ENCODE measurements at regions of chr16 and their contacts with region 1.

Region 1: GRCh38 chr16:11255737-11256660 is at the start of gene SOCS1:
- DNase-seq: peak; percentile 76 to 97 (median 87)
- ATAC-seq: peak; percentile 82
- H3K4me3 ChIP-seq: peak within 1 kb of the TSS; percentile 85
- H3K4me3 Mint-ChIP-seq: peak within 1 kb of the TSS; percentile 91 to 98 (median 94)
- H3K27ac ChIP-seq: peak within 1 kb of the TSS; percentile 97
- H3K27ac Mint-ChIP-seq: peak within 1 kb of the TSS; percentile 88 to 97 (median 96)
- H3K4me1 ChIP-seq: peaks cover 48 to 52% of the 10 kb centered on the region in 2 donors
- H3K4me1 Mint-ChIP-seq: peaks cover 19 to 64% (median 59%) of the 10 kb centered on the region in 7 donors
- H3K27me3 ChIP-seq: no peaks in the 10 kb centered on the region
- H3K27me3 Mint-ChIP-seq: peaks cover 0 to 4% (median 0%) of the 10 kb centered on the region in 5 donors
- total RNA-seq, gene SOCS1: 12.8 to 191 (median 46.8) TPM

Region 2: GRCh38 chr16:9665851-9666271 is 1590.1 kb before region 1 on chr16:
- CTCF ChIA-PET with region 1: no interaction called
- POLR2A ChIA-PET with region 1: no interaction called
- intact Hi-C with region 1: no loop called
- DNase-seq: no peak
- ATAC-seq: no peak
- H3K4me3 ChIP-seq: no peak overlapping the region
- H3K4me3 Mint-ChIP-seq: no peak overlapping the region
- H3K27ac ChIP-seq: no peak overlapping the region
- H3K27ac Mint-ChIP-seq: no peak overlapping the region
- H3K4me1 ChIP-seq: no peaks in the 10 kb centered on the region
- H3K4me1 Mint-ChIP-seq: no peaks in the 10 kb centered on the region
- H3K27me3 ChIP-seq: no peaks in the 10 kb centered on the region
- H3K27me3 Mint-ChIP-seq: peaks cover 0 to 12% (median 3%) of the 10 kb centered on the region in 5 donors

Region 3: GRCh38 chr16:10971560-10971961 is 284.4 kb before region 1 on chr16:
- CTCF ChIA-PET with region 1: interaction called, 29 read pairs
- POLR2A ChIA-PET with region 1: interaction called, 17 read pairs
- intact Hi-C with region 1: loop called (anchors 1 kb)
- DNase-seq: peak in 6 of 9 donors; percentile 15 to 56 (median 46)
- ATAC-seq: peak; percentile 62
- H3K4me3 ChIP-seq: no peak overlapping the region
- H3K4me3 Mint-ChIP-seq: peak overlapping the region in 1 of 10 donors; percentile 60
- H3K27ac ChIP-seq: no peak overlapping the region
- H3K27ac Mint-ChIP-seq: peak overlapping the region in 3 of 9 donors; percentile 18 to 49 (median 42)
- H3K4me1 ChIP-seq: no peaks in the 10 kb centered on the region
- H3K4me1 Mint-ChIP-seq: peaks cover 6 to 70% (median 15%) of the 10 kb centered on the region in 7 donors
- H3K27me3 ChIP-seq: no peaks in the 10 kb centered on the region
- H3K27me3 Mint-ChIP-seq: no peaks in the 10 kb centered on the region

Region 4: GRCh38 chr16:11177578-11178160 is 78.3 kb before region 1 on chr16:
- CTCF ChIA-PET with region 1: no interaction called
- POLR2A ChIA-PET with region 1: no interaction called
- intact Hi-C with region 1: no loop called
- DNase-seq: no peak
- ATAC-seq: no peak
- H3K4me3 ChIP-seq: no peak overlapping the region
- H3K4me3 Mint-ChIP-seq: no peak overlapping the region
- H3K27ac ChIP-seq: no peak overlapping the region
- H3K27ac Mint-ChIP-seq: peak overlapping the region in 1 of 9 donors; percentile 78
- H3K4me1 ChIP-seq: no peaks in the 10 kb centered on the region
- H3K4me1 Mint-ChIP-seq: peaks cover 4 to 52% (median 13%) of the 10 kb centered on the region in 7 donors
- H3K27me3 ChIP-seq: no peaks in the 10 kb centered on the region
- H3K27me3 Mint-ChIP-seq: no peaks in the 10 kb centered on the region

Region 5: GRCh38 chr16:11224096-11224893 is 31.7 kb before region 1 on chr16:
- CTCF ChIA-PET with region 1: interaction called, 26 read pairs
- POLR2A ChIA-PET with region 1: interaction called, 244 read pairs
- intact Hi-C with region 1: loop called (anchors 1 kb)
- DNase-seq: peak; percentile 36 to 67 (median 48)
- ATAC-seq: peak; percentile 68
- H3K4me3 ChIP-seq: peak overlapping the region; percentile 49
- H3K4me3 Mint-ChIP-seq: peak overlapping the region; percentile 78 to 87 (median 80)
- H3K27ac ChIP-seq: peak overlapping the region; percentile 91
- H3K27ac Mint-ChIP-seq: peak overlapping the region; percentile 97 to 99 (median 98)
- H3K4me1 ChIP-seq: peaks cover 30 to 36% of the 10 kb centered on the region in 2 donors
- H3K4me1 Mint-ChIP-seq: peaks cover 37 to 73% (median 52%) of the 10 kb centered on the region in 7 donors
- H3K27me3 ChIP-seq: no peaks in the 10 kb centered on the region
- H3K27me3 Mint-ChIP-seq: no peaks in the 10 kb centered on the region

Region 6: GRCh38 chr16:11328172-11329070 is 72.4 kb after region 1 on chr16:
- CTCF ChIA-PET with region 1: interaction called, 3 read pairs
- POLR2A ChIA-PET with region 1: interaction called, 16 read pairs
- intact Hi-C with region 1: no loop called
- DNase-seq: peak in 7 of 9 donors; percentile 24 to 52 (median 30)
- ATAC-seq: peak; percentile 83
- H3K4me3 ChIP-seq: peak overlapping the region; percentile 32
- H3K4me3 Mint-ChIP-seq: peak overlapping the region; percentile 46 to 85 (median 70)
- H3K27ac ChIP-seq: no peak overlapping the region
- H3K27ac Mint-ChIP-seq: peak overlapping the region; percentile 21 to 88 (median 73)
- H3K4me1 ChIP-seq: peaks cover 8 to 17% of the 10 kb centered on the region in 2 donors
- H3K4me1 Mint-ChIP-seq: peaks cover 11 to 68% (median 26%) of the 10 kb centered on the region in 7 donors
- H3K27me3 ChIP-seq: no peaks in the 10 kb centered on the region
- H3K27me3 Mint-ChIP-seq: peaks cover 0 to 4% (median 0%) of the 10 kb centered on the region in 5 donors

Region 7: DNA sequence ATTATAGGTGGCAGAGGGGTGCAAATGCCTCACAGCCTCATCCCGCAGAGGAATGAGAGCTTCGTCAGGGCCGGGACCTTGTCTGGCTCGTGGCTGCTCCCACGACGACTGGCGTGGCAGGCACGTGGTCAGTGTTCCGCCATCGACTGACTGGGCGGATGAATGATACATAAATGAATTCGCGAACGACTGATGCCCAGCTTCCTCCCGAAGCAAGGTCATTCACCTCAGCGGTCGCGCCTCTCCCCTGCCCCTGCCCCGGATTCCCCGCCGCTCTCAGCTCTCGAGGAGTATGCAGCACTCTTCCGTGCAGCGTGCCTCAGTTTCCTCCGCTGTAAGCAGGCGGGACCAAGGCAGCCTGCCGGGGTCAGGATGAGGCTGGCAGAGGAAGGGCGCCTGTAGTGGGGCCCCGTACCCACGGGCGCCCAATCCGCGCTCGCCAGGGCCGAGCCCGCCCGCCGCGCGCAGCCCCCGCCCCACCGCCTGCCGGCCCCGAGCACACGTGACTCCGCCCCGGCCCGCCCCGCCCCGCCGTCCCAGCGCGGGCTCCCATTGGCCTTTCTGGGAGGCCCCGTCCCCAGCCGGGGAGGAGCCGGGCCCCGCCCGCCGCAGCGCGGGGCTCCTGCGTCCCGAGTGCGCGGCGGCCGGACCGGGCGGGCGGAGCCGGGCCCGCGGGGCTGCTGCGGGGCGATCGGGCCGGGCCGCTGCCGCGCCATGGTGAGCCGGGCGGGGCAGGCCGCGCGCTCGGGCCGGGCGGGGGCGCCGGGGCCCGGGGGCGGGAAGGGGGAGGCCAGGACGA is 412.0 kb after region 1 on chr16 and contains the start of gene SNN:
- CTCF ChIA-PET with region 1: no interaction called
- POLR2A ChIA-PET with region 1: interaction called, 5 read pairs
- intact Hi-C with region 1: loop called in 1 of 2 experiments (anchors 5 kb)
- DNase-seq: peak; percentile 76 to 91 (median 83)
- ATAC-seq: peak; percentile 89
- H3K4me3 ChIP-seq: peak within 1 kb of the TSS; percentile 77
- H3K4me3 Mint-ChIP-seq: peak within 1 kb of the TSS; percentile 88 to 96 (median 91)
- H3K27ac ChIP-seq: peak within 1 kb of the TSS; percentile 85
- H3K27ac Mint-ChIP-seq: peak within 1 kb of the TSS; percentile 85 to 98 (median 96)
- H3K4me1 ChIP-seq: peaks cover 36 to 80% of the 10 kb centered on the region in 2 donors
- H3K4me1 Mint-ChIP-seq: peaks cover 53 to 87% (median 71%) of the 10 kb centered on the region in 7 donors
- H3K27me3 ChIP-seq: no peaks in the 10 kb centered on the region
- H3K27me3 Mint-ChIP-seq: no peaks in the 10 kb centered on the region
- total RNA-seq, gene SNN: 17.0 to 86.8 (median 34.4) TPM

Region 8: DNA sequence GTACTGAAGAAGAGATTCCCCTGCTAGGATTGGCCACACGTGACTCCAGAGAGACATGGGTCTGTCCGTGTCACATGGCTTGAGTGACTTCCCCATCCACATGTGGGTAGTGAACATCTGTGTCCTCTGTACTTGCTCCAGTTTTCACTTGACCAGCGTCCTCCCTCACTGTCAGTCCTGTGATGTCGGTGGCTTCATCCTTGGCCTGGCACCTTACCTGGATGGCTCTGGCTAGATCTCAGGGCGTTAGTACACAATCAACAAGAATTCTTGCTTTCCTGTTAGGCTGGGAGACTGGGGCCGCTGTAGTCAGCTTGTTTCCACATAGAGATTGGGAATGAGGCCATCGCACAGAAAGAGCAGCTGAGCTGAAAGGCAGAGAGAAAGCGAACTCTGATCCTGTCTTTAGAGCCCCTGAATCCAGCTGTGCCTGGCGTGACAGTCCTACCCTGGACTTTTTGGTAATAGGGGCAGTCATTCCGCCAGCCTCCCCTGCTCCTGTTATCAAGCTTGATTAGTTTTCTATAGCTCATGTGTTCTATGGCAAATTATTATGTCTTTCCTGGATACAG is 947.9 kb after region 1 on chr16:
- CTCF ChIA-PET with region 1: no interaction called
- POLR2A ChIA-PET with region 1: interaction called, 10 read pairs
- intact Hi-C with region 1: no loop called
- DNase-seq: no peak
- ATAC-seq: no peak
- H3K4me3 ChIP-seq: no peak overlapping the region
- H3K4me3 Mint-ChIP-seq: no peak overlapping the region
- H3K27ac ChIP-seq: no peak overlapping the region
- H3K27ac Mint-ChIP-seq: peak overlapping the region in 1 of 9 donors; percentile 68
- H3K4me1 ChIP-seq: no peaks in the 10 kb centered on the region
- H3K4me1 Mint-ChIP-seq: peaks cover 0 to 16% (median 9%) of the 10 kb centered on the region in 7 donors
- H3K27me3 ChIP-seq: no peaks in the 10 kb centered on the region
- H3K27me3 Mint-ChIP-seq: no peaks in the 10 kb centered on the region